ENCODE measurements at regions of chr7 and their contacts with region 1.

Region 1: GRCh38 chr7:76234931-76235441 is 33.3 kb downstream of the SRRM3 start:
- DNase-seq: peak; percentile 90 to 96
- H3K4me3 ChIP-seq: peak overlapping the region; percentile 34
- H3K4me3 Mint-ChIP-seq: peak overlapping the region; percentile 51
- H3K27ac Mint-ChIP-seq: no peak overlapping the region
- H3K4me1 ChIP-seq: 0 out of 2 replicates have a peak, but pooled peaks cover 2% of the 10 kb centered on the region
- H3K4me1 Mint-ChIP-seq: no peaks in the 10 kb centered on the region
- H3K27me3 ChIP-seq: no peaks in the 10 kb centered on the region
- H3K27me3 Mint-ChIP-seq: peaks cover 13% of the 10 kb centered on the region
- CTCF ChIP-seq: no peak

Region 2: GRCh38 chr7:76220185-76221057 is 14.6 kb before region 1 on chr7:
- CTCF ChIA-PET with region 1: no interaction called
- POLR2A ChIA-PET with region 1: interaction called, 11 read pairs
- intact Hi-C with region 1: no loop called
- DNase-seq: peak; percentile 46 to 49
- H3K4me3 ChIP-seq: no peak overlapping the region
- H3K4me3 Mint-ChIP-seq: no peak overlapping the region
- H3K27ac Mint-ChIP-seq: no peak overlapping the region
- H3K4me1 ChIP-seq: peaks cover 8% of the 10 kb centered on the region
- H3K4me1 Mint-ChIP-seq: peaks cover 6% of the 10 kb centered on the region
- H3K27me3 ChIP-seq: no peaks in the 10 kb centered on the region
- H3K27me3 Mint-ChIP-seq: peaks cover 7% of the 10 kb centered on the region
- CTCF ChIP-seq: no peak

Region 3: GRCh38 chr7:76282344-76283253 is 47.6 kb after region 1 on chr7:
- CTCF ChIA-PET with region 1: no interaction called
- POLR2A ChIA-PET with region 1: no interaction called
- intact Hi-C with region 1: no loop called
- DNase-seq: peak in 1 of 2 experiments; percentile 47
- H3K4me3 ChIP-seq: peak overlapping the region; percentile 33
- H3K4me3 Mint-ChIP-seq: peak overlapping the region; percentile 81
- H3K27ac Mint-ChIP-seq: no peak overlapping the region
- H3K4me1 ChIP-seq: peaks cover 3% of the 10 kb centered on the region; the same call in 1 of the 2 replicates
- H3K4me1 Mint-ChIP-seq: peaks cover 9% of the 10 kb centered on the region
- H3K27me3 ChIP-seq: peaks cover 2% of the 10 kb centered on the region; the same call in 1 of the 2 replicates
- H3K27me3 Mint-ChIP-seq: peaks cover 23% of the 10 kb centered on the region
- CTCF ChIP-seq: no peak

Region 4: GRCh38 chr7:76411626-76412025 is 176.6 kb after region 1 on chr7:
- CTCF ChIA-PET with region 1: no interaction called
- POLR2A ChIA-PET with region 1: no interaction called
- intact Hi-C with region 1: no loop called
- DNase-seq: no peak
- H3K4me3 ChIP-seq: no peak overlapping the region
- H3K4me3 Mint-ChIP-seq: no peak overlapping the region
- H3K27ac Mint-ChIP-seq: no peak overlapping the region
- H3K4me1 ChIP-seq: no peaks in the 10 kb centered on the region
- H3K4me1 Mint-ChIP-seq: no peaks in the 10 kb centered on the region
- H3K27me3 ChIP-seq: no peaks in the 10 kb centered on the region
- H3K27me3 Mint-ChIP-seq: no peaks in the 10 kb centered on the region
- CTCF ChIP-seq: no peak